Gastrocnemius medialis (tissue), 4 donors: ENCODE measurements at regions of chr12 and their contacts with region 1.

Region 1: DNA sequence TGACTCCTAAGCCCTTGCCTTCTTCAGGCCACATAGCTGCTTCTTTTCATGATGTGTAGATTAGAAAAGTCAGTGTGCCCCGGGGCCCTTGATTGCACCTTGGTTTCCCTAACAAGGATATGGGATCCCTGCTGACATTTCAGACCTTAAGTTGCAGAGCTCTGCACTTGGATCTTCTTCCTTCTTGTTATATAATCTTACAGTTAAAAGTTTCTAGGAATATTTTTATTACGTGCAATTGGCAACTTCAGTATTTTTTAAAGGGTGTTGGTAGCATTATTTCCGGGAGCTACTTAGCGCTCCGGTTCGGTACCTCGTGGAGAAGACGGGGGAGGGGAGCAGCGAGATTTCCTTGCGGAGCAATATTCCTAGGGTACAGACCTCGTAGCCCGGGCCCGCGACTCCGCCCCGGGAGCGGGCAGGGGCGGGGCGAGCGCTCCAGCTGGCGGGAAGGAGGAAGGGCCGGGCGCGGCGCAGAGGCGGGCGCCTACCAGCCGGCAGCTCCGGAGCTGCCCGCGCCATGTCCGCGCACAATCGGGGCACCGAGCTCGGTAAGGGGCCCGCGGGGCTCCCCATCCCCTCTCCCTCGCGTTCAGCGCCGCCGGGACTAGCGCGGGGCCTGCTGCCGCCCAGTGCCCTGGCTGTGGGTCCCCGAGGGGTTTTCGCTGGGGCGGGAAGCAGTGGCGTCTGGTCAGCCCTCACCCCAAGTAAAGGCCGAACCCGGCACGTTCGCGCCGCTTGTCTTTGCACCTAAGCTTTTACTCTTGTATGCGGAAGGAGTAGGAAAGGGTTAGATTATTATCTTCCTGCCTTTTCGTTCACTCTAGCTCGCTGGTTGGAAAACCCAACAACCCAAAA is at the start of gene DERA:
- DNase-seq: peak; percentile 49 to 73
- ATAC-seq: peak; percentile 94 to 96
- H3K4me3 ChIP-seq: peak within 1 kb of the TSS; percentile 76 to 87 (median 80)
- H3K27ac ChIP-seq: peak within 1 kb of the TSS; percentile 85 to 91 (median 88)
- H3K4me1 ChIP-seq: peaks cover 3 to 6% of the 10 kb centered on the region in 2 donors
- H3K27me3 ChIP-seq: no peaks in the 10 kb centered on the region
- CTCF ChIP-seq: no peak
- POLR2A ChIP-seq: peak; percentile 81 to 88
- total RNA-seq, gene DERA: 29.2 to 50.1 (median 34.3) TPM

Region 2: GRCh38 chr12:14554281-14555007 is 1356.6 kb before region 1 on chr12:
- in situ Hi-C with region 1: no loop called
- intact Hi-C with region 1: loop called (anchors 5 kb)
- DNase-seq: peak; percentile 67 to 82
- ATAC-seq: peak; percentile 98 to 99
- H3K4me3 ChIP-seq: peak overlapping the region in 3 of 4 donors; percentile 31 to 37 (median 31)
- H3K27ac ChIP-seq: peak overlapping the region; percentile 73 to 79 (median 78)
- H3K4me1 ChIP-seq: peaks cover 10 to 15% of the 10 kb centered on the region in 2 donors
- H3K27me3 ChIP-seq: no peaks in the 10 kb centered on the region
- CTCF ChIP-seq: peak in 1 of 5 experiments; percentile 11
- POLR2A ChIP-seq: no peak

Region 3: GRCh38 chr12:14774906-14775762 is 1136.0 kb before region 1 on chr12:
- in situ Hi-C with region 1: loop called in 1 of 4 experiments (anchors 25 kb)
- intact Hi-C with region 1: no loop called
- DNase-seq: peak; percentile 27 to 50
- ATAC-seq: peak; percentile 8 to 10
- H3K4me3 ChIP-seq: peak overlapping the region; percentile 81 to 89 (median 84)
- H3K27ac ChIP-seq: peak overlapping the region; percentile 81 to 95 (median 94)
- H3K4me1 ChIP-seq: peaks cover 8 to 18% of the 10 kb centered on the region in 2 donors
- H3K27me3 ChIP-seq: no peaks in the 10 kb centered on the region
- CTCF ChIP-seq: no peak
- POLR2A ChIP-seq: peak in 1 of 2 donors; percentile 28

Region 4: GRCh38 chr12:15650399-15651128 is 260.5 kb before region 1 on chr12:
- in situ Hi-C with region 1: no loop called
- intact Hi-C with region 1: no loop called
- DNase-seq: no peak
- ATAC-seq: no peak
- H3K4me3 ChIP-seq: no peak overlapping the region
- H3K27ac ChIP-seq: no peak overlapping the region
- H3K4me1 ChIP-seq: no peaks in the 10 kb centered on the region
- H3K27me3 ChIP-seq: no peaks in the 10 kb centered on the region
- CTCF ChIP-seq: no peak
- POLR2A ChIP-seq: no peak